Heart right ventricle (tissue), 16 donors: ENCODE measurements at regions of chr20 and their contacts with region 1.

Region 1: GRCh38 chr20:17536944-17537444 is 5.8 kb upstream of the BFSP1 start:
- DNase-seq: peak; percentile 26 to 77
- ATAC-seq: peak; percentile 96 to 98 (median 97)
- H3K4me3 ChIP-seq: no peak overlapping the region
- H3K27ac ChIP-seq: no peak overlapping the region
- H3K4me1 ChIP-seq: peaks cover 0 to 10% (median under 1%) of the 10 kb centered on the region in 9 donors
- H3K27me3 ChIP-seq: peaks cover 0 to 2% (median 0%) of the 10 kb centered on the region in 7 donors
- CTCF ChIP-seq: peak; percentile 80 to 95 (median 89)

Region 2: DNA sequence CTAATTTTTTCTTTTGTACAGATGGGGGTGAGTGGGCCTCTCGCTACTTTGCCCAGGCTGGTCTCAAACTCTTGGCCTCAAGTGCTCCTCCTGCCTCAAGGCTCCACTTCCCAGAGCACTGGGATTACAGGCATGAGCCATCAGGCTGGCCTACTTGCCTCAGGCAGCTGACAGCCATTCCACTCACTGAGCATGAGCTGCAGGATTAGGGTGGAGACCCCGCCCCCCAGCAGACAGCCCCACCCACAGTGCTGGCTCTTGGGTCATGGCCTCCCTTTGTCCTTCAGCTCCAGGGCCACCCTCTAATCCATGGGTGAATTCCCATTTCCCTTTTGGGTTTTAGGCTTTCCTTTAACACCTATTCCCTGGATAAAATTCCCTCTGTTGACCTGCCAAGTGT is 88.0 kb before region 1 on chr20:
- intact Hi-C with region 1: no loop called
- DNase-seq: no peak
- ATAC-seq: no peak
- H3K4me3 ChIP-seq: no peak overlapping the region
- H3K27ac ChIP-seq: no peak overlapping the region
- H3K4me1 ChIP-seq: no peaks in the 10 kb centered on the region
- H3K27me3 ChIP-seq: peaks cover 0 to 47% (median 18%) of the 10 kb centered on the region in 7 donors
- CTCF ChIP-seq: no peak

Region 3: DNA sequence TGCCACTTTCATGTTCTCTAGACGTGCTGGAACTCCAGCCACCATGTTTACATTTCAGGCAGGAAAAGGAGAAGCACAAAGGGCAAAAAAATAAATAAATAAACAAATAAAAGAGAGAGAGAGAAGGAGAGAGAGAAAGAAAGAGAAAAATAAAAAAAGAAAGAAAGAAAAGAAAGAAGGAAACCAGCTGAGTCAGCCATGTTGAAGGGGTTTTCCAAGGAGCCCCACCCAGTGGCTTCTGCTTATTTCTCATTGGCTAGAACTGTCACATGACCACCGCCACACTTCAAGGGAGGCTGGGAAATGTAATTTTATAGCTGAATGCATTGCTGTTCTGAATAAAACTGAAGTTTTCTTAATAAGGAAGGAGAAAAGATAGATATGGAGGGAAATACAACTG is 76.9 kb before region 1 on chr20:
- intact Hi-C with region 1: no loop called
- DNase-seq: no peak
- ATAC-seq: no peak
- H3K4me3 ChIP-seq: no peak overlapping the region
- H3K27ac ChIP-seq: no peak overlapping the region
- H3K4me1 ChIP-seq: no peaks in the 10 kb centered on the region
- H3K27me3 ChIP-seq: peaks cover 0 to 20% (median 14%) of the 10 kb centered on the region in 7 donors
- CTCF ChIP-seq: no peak

Region 4: DNA sequence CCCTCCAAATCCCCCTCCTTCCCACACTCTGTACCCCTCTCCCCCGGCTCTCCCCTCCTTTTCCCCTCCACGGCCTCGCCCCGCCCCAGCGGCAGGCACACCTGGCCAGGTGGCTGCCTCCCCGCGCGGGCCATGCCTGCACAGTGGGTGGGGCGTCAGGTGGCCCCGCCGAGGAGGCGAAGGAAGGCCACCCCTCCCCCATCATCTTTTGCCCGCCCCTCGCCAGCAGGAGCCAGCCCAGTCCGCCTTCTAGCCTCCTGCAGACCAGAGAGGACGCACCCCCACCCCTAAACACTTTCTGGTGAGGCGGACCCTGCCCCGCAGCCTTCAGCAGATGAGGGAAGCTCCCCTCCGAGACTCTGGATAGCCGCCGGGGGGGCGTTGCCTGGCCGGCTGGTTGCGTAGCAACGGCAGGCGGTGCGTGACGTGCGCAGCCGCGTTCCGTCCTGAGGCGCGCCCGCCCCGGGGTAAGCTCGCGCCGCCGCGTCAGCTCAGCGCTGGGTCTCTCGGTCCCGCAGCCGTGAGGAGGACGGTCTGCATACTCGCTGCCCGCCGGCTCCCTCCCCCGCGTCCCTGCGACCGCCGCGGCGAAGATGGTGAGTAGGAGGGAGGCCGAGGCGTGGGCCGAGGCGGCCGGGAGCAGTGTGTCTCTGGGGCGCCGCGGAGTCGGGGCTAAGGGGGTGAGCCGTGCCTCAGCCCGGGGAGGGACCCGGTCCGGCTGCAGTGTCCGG is 32.8 kb after region 1 on chr20 and contains the start of gene DSTN:
- intact Hi-C with region 1: loop called in 2 of 10 experiments (anchors 2 to 5 kb)
- DNase-seq: peak; percentile 92 to 94
- ATAC-seq: peak; percentile 91 to 96 (median 94)
- H3K4me3 ChIP-seq: peak within 1 kb of the TSS; percentile 81 to 99 (median 96)
- H3K27ac ChIP-seq: peak within 1 kb of the TSS; percentile 95 to 100 (median 99)
- H3K4me1 ChIP-seq: peaks cover 4 to 55% (median 49%) of the 10 kb centered on the region in 9 donors
- H3K27me3 ChIP-seq: no peaks in the 10 kb centered on the region
- CTCF ChIP-seq: no peak
- total RNA-seq, gene DSTN: 353 to 802 (median 569) TPM

Region 5: GRCh38 chr20:17611540-17612286 is 74.7 kb after region 1 on chr20:
- intact Hi-C with region 1: loop called in 7 of 10 experiments (anchors 2 to 5 kb)
- DNase-seq: no peak
- ATAC-seq: peak in 5 of 8 donors; percentile 2 to 18 (median 5)
- H3K4me3 ChIP-seq: no peak overlapping the region
- H3K27ac ChIP-seq: peak overlapping the region in 9 of 10 donors; percentile 42 to 66 (median 56)
- H3K4me1 ChIP-seq: peaks cover 32 to 69% (median 53%) of the 10 kb centered on the region in 9 donors
- H3K27me3 ChIP-seq: no peaks in the 10 kb centered on the region
- CTCF ChIP-seq: peak in 3 of 9 donors; percentile 3 to 38 (median 30)

Region 6: DNA sequence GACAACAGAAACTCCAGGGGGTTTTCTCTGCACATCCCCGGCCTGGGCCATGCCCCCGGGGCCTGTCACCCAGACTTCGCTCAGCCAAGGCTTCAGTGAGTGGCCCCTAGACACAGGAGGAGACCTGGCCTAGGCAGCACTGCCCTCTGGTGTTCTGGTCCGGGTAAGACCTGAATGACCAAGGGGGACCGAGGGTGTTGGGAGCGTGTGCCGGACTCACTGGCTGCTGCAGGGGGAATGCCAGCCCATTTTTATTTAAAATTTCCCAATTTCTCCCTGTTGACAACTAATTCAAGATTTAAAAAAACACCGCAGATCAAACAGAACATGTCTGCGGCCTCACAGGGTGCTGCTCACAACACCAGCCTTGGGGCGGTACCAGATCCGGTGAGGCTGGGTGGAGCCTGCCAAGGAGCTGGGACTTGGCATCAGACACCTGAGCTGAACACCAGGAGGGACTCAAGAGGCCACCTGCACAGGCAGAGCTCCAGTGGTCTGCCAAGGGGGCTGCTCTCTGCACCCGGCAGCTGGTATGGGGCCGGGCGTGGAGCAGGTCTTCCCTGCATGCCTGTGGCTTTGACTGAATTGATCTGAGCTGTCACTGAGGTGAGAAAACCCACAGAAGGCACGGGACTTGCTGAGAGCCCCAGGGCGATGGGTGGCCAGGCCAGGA is 80.7 kb after region 1 on chr20:
- intact Hi-C with region 1: loop called (anchors 1 to 5 kb)
- DNase-seq: peak in 1 of 2 donors; percentile 65
- ATAC-seq: peak; percentile 38 to 63 (median 50)
- H3K4me3 ChIP-seq: no peak overlapping the region
- H3K27ac ChIP-seq: no peak overlapping the region
- H3K4me1 ChIP-seq: peaks cover 17 to 49% (median 27%) of the 10 kb centered on the region in 9 donors
- H3K27me3 ChIP-seq: no peaks in the 10 kb centered on the region
- CTCF ChIP-seq: peak; percentile 55 to 83 (median 74)

Region 7: DNA sequence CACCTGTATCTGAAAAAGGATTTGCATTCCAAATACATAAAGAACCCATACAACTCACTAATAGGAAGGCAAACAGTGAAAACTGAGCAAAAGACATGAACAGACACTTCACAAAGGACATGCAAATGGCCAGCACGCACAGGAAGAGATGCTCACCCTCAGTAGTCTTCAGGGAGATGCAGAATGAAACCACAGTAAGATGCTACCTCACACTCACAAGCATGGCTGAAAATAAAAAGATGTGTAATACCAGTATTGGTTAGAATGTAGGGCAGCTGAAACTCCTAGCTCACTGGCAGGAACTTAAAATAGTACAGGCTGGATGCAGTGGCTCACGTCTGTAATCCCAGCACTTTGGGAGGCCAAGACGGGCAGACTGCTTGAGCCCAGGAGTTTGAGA is 367.0 kb after region 1 on chr20:
- intact Hi-C with region 1: loop called in 7 of 10 experiments (anchors 5 to 10 kb)
- DNase-seq: no peak
- ATAC-seq: no peak
- H3K4me3 ChIP-seq: no peak overlapping the region
- H3K27ac ChIP-seq: no peak overlapping the region
- H3K4me1 ChIP-seq: no peaks in the 10 kb centered on the region
- H3K27me3 ChIP-seq: no peaks in the 10 kb centered on the region
- CTCF ChIP-seq: no peak

Region 8: DNA sequence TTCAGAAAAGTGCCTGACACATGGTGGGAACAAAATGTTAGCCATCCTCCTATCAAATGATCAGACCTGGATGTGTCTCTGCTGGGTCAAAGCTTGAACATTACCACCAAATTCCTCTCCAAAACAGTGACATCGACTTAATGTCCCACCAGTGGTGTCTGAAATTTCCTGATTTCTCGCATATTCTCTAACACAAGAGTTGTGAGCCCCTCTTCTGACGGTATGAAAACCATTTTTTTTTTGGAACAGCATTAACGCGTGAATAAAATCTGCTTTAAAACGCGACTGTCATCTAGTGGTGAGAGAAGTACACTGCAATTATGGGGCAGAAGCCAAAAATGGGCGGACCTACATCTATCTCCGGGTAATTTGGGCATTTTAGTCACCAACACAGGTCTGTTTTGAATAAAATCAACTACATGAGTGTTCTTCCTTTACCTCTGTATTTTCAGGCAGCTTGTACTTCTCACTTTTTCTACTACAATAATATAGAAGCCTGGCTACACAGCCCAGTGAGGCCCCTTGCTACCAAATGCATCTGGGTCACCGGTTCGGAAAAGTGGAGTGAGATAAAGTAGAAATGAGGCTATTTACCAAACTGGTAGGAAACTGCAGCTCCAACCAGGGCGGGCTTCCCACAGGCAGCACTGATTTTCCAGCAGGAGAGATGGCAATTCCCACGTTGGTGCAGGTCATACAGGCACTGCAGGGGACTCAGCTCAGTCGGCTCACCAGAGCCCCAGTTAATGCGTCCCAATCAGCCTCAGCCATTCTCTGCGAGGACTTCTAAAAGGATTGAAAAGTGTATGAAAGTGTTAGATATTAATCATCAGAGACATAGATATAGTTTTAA is 459.2 kb after region 1 on chr20:
- intact Hi-C with region 1: loop called in 1 of 10 experiments (anchors 5 kb)
- DNase-seq: peak in 1 of 2 donors; percentile 46
- ATAC-seq: peak in 6 of 8 donors; percentile 62 to 79 (median 70)
- H3K4me3 ChIP-seq: peak overlapping the region in 1 of 10 donors; percentile 15
- H3K27ac ChIP-seq: no peak overlapping the region
- H3K4me1 ChIP-seq: peaks cover 0 to 11% (median 0%) of the 10 kb centered on the region in 9 donors
- H3K27me3 ChIP-seq: no peaks in the 10 kb centered on the region
- CTCF ChIP-seq: peak; percentile 89 to 98 (median 96)